ENCODE measurements at regions of chr17 and their contacts with region 1.

Region 1: DNA sequence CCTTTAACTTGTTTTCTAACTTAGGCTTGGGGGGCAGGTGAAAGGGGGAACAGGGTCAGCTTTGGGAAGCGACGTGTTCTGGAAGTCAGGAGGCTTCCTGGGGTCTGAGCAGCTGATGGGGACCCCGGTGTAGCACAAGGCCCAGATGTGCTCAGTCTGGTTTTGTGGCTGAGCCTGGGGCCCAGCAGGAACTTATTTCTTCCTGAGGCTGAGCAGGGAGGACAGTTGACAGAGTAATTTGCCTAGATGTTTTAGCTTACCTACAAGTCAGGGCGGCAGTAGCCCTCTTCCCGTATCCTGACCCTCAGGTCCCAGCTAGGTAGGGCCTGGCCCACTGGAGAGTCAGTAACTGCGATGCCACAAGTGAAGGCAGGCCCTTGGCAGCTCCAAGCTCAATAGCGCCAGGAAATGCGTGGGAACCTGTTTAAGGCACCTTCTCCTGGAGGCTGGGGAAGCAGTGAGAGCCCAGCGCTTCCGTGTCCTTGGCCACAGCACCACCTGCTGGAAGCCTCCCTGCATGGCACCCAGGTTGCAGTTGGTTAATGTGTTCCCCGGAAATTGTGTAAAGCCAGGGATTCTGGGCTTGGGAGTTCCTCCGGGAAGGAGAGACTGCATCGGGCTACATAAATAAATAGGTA is 5.2 kb downstream of the CCR7 start:
- DNase-seq: peak; percentile 74
- H3K4me3 Mint-ChIP-seq: peak overlapping the region; percentile 90
- H3K27ac Mint-ChIP-seq: peak overlapping the region; percentile 99
- H3K4me1 Mint-ChIP-seq: peaks cover 89% of the 10 kb centered on the region
- H3K27me3 Mint-ChIP-seq: peaks cover 2% of the 10 kb centered on the region

Region 2: DNA sequence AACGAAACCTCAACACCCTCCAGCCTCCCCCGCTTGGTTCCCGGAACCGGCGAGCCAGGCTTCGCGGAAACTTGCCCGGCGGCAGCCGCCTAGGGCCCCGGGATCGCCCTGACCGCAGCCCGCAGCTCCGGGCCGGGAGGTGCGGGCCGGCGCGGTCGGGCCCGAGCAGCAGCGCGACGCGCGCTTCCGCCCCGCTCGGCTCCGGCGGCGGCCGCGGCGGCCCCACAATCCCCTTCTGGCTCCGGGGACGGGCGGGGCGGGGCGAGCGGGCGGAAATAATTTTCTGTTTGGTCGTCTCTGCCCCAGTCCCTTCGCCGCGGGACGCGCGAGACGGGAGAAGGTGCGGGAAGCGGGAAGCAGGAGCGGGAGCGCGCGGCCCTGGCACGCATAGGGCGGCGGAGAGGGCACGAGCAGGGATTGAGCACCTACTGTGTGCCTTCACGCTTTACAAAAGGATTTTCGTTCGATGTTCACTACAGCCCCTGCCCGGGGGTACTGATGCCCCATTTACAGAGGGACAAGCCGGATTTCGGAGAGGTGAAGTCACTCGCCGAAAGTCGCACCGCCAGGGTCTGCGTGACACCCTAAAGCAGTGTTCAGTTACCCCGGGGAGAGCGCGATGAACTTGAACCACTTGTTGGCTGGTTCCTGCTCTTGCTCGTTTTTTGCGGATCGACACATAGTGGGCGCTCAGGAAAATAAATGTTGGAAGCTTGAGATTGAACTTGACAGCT is 1857.7 kb before region 1 on chr17:
- intact Hi-C with region 1: loop called (anchors 10 kb)
- DNase-seq: peak; percentile 75
- H3K4me3 Mint-ChIP-seq: peak overlapping the region; percentile 97
- H3K27ac Mint-ChIP-seq: peak overlapping the region; percentile 99
- H3K4me1 Mint-ChIP-seq: peaks cover 65% of the 10 kb centered on the region
- H3K27me3 Mint-ChIP-seq: no peaks in the 10 kb centered on the region

Region 3: DNA sequence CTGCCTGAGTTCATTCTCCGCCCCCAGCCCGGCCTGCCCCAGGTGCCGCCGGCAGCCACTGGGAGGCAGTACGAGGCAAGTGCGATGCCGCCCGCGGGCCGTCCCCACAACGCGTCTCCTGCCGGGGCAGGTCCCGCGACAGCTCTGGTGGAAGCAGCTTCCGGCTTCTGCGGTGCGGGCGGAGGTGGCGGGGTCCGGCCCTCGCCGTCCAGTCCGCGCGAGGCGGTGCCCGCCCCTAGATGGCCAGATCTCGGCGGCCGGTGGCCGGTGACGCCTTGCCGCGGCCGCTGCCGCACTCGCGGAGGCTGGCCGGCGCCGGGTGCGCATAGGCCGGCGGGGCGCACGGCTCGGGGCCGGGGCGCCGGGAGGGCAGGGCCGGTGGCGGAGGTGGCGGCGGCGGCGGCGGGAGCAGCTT is 197.4 kb before region 1 on chr17:
- intact Hi-C with region 1: loop called (anchors 1 kb)
- DNase-seq: peak; percentile 85
- H3K4me3 Mint-ChIP-seq: peak overlapping the region; percentile 77
- H3K27ac Mint-ChIP-seq: peak overlapping the region; percentile 84
- H3K4me1 Mint-ChIP-seq: peaks cover 14% of the 10 kb centered on the region
- H3K27me3 Mint-ChIP-seq: peaks cover 1% of the 10 kb centered on the region

Region 4: DNA sequence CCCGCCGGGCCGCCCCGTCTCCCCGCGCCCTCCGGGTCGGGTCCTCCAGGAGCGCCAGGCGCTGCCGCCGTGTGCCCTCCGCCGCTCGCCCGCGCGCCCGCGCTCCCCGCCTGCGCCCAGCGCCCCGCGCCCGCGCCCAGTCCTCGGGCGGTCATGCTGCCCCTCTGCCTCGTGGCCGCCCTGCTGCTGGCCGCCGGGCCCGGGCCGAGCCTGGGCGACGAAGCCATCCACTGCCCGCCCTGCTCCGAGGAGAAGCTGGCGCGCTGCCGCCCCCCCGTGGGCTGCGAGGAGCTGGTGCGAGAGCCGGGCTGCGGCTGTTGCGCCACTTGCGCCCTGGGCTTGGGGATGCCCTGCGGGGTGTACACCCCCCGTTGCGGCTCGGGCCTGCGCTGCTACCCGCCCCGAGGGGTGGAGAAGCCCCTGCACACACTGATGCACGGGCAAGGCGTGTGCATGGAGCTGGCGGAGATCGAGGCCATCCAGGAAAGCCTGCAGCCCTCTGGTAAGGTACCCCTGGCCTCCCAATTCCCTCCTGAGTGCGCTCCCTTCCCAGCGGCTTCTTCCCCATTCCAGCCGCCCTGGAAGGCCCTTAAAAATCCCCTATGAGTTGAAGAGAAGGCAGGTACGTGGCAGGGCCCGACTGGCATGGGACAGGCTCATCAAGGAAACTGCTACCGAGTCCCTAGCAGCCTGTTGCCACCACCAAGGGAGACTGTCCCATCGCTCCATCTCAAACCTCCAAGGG is 116.3 kb before region 1 on chr17:
- intact Hi-C with region 1: loop called (anchors 1 kb)
- DNase-seq: peak; percentile 63
- H3K4me3 Mint-ChIP-seq: peak overlapping the region; percentile 80
- H3K27ac Mint-ChIP-seq: peak overlapping the region; percentile 90
- H3K4me1 Mint-ChIP-seq: peaks cover 65% of the 10 kb centered on the region
- H3K27me3 Mint-ChIP-seq: peaks cover 7% of the 10 kb centered on the region

Region 5: GRCh38 chr17:40542558-40543411 is 17.3 kb before region 1 on chr17:
- intact Hi-C with region 1: loop called (anchors 1 kb)
- DNase-seq: no peak
- H3K4me3 Mint-ChIP-seq: peak overlapping the region; percentile 69
- H3K27ac Mint-ChIP-seq: peak overlapping the region; percentile 88
- H3K4me1 Mint-ChIP-seq: peaks cover 75% of the 10 kb centered on the region
- H3K27me3 Mint-ChIP-seq: peaks cover 10% of the 10 kb centered on the region

Region 6: GRCh38 chr17:40608061-40608588 is 48.1 kb after region 1 on chr17:
- intact Hi-C with region 1: loop called (anchors 1 kb)
- DNase-seq: peak; percentile 24
- H3K4me3 Mint-ChIP-seq: peak overlapping the region; percentile 39
- H3K27ac Mint-ChIP-seq: peak overlapping the region; percentile 93
- H3K4me1 Mint-ChIP-seq: peaks cover 93% of the 10 kb centered on the region
- H3K27me3 Mint-ChIP-seq: peaks cover 3% of the 10 kb centered on the region

Region 7: GRCh38 chr17:40818733-40819527 is 258.9 kb after region 1 on chr17:
- intact Hi-C with region 1: loop called (anchors 1 kb)
- DNase-seq: peak; percentile 85
- H3K4me3 Mint-ChIP-seq: peak overlapping the region; percentile 96
- H3K27ac Mint-ChIP-seq: peak overlapping the region; percentile 88
- H3K4me1 Mint-ChIP-seq: peaks cover 31% of the 10 kb centered on the region
- H3K27me3 Mint-ChIP-seq: peaks cover 11% of the 10 kb centered on the region

Measured in activated T-helper 1 cell treated with anti-CD3 and anti-CD28 coated beads, Interleukin-12 subunit alpha, Interleukin-12 subunit beta, Interleukin-2, Interleukin-4 antibody, amounts not matched to agents 30 ng/mL and 10 ng/mL and 1 ng/mL, durations not matched to agents 14 hours and 24 hours and 36 hours (primary cell).